ENCODE measurements at regions of chr3 and their contacts with region 1.

Region 1: GRCh38 chr3:175453361-175453760 is 594.2 kb downstream of the NAALADL2 start:
- DNase-seq: no peak
- ATAC-seq: no peak

Region 2: GRCh38 chr3:173529067-173529711 is 1924.2 kb before region 1 on chr3:
- intact Hi-C with region 1: loop called (anchors 5 kb)
- DNase-seq: no peak
- ATAC-seq: no peak

Region 3: DNA sequence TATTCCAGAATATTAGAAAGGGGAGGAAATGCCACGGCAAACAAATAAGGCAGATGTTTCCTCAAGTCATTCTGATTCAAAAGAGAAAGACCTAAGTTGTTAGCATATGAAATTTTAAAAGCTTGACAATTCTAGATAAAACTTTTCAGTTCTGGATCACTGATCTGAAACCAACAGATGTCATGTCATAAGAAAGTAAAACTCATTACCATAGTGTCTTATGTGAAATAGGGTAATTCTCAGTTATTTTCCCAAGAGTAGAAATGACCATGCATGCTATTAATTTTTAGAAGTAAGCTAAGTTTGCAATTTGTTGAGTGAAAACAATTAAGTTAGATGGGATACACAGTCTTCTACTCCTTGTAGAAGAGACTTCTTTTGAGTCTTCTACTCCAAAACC is 36.0 kb after region 1 on chr3:
- intact Hi-C with region 1: no loop called
- DNase-seq: no peak
- ATAC-seq: no peak

Region 4: DNA sequence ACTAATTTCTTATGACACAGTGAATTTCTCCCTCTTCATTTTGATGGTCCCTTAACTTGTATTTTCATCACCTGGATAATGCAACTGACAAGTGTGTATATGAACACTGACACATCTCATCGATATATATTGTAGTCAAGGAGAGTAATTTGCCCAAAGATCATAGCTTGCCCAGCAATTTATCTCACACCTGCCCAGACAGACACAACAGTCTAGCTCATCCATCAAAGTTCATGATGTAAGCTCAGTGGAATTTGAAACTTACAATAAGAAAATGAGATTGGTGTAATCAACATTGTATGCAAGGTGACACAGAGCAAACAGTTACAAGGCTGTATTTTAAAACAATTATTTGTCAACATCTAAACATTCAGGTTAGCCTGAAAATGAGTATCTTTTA is 211.6 kb after region 1 on chr3:
- intact Hi-C with region 1: no loop called
- DNase-seq: no peak
- ATAC-seq: no peak

Region 5: DNA sequence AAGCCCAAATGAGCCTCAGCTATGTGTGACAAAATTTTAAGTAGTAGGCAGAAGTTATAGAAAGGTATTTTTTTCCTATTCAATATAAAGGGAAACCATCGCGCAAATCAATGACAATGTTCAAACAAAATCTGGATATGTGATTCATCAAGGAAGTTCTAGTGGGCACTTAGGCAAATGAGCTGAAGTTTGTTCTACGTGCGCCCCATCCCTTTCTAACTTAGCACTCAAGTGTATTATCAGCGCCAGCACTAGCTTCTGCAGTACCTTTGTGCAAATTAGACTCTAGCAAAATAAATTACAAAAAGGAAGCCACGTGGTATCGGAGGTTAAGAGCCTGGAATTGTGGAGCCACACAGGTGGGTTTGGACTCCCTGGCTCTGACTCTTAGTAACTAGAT is 1652.8 kb after region 1 on chr3:
- intact Hi-C with region 1: no loop called
- DNase-seq: no peak
- ATAC-seq: no peak

Measured in sciatic nerve (tissue), 2 donors.